ENCODE measurements at regions of chr6 and their contacts with region 1.

Region 1: GRCh38 chr6:20401205-20402091 is at the start of gene E2F3:
- H3K4me3 Mint-ChIP-seq: peak within 1 kb of the TSS; percentile 93
- H3K27ac Mint-ChIP-seq: peak within 1 kb of the TSS; percentile 99
- H3K4me1 Mint-ChIP-seq: peaks cover 9% of the 10 kb centered on the region
- H3K27me3 Mint-ChIP-seq: no peaks in the 10 kb centered on the region

Region 2: GRCh38 chr6:20212392-20213217 is 188.8 kb before region 1 on chr6 and contains the start of gene MBOAT1:
- intact Hi-C with region 1: loop called (anchors 5 kb)
- H3K4me3 Mint-ChIP-seq: peak within 1 kb of the TSS; percentile 81
- H3K27ac Mint-ChIP-seq: peak within 1 kb of the TSS; percentile 97
- H3K4me1 Mint-ChIP-seq: peaks cover 35% of the 10 kb centered on the region
- H3K27me3 Mint-ChIP-seq: no peaks in the 10 kb centered on the region

Region 3: DNA sequence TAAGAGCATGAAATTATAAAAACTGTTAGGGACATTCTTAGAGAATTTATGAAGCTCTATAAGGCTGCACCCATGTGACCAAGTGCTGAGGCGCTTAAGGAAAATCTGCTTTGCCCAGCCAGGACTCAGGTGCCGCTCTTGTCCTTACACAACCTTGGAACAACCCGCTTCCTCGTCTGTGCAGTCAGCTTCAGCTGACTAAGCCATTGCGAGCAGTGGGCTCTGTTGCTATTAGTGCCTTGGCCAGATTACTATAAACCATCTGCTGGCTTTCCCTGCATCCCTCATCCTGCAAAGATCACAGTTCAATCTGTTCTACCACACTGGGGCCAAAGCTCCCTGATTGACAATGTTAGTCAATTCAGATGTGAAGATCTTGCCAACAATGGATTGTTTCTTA is 88.8 kb before region 1 on chr6:
- intact Hi-C with region 1: loop called (anchors 5 kb)
- H3K4me3 Mint-ChIP-seq: no peak overlapping the region
- H3K27ac Mint-ChIP-seq: no peak overlapping the region
- H3K4me1 Mint-ChIP-seq: peaks cover 13% of the 10 kb centered on the region
- H3K27me3 Mint-ChIP-seq: peaks cover 11% of the 10 kb centered on the region

Region 4: DNA sequence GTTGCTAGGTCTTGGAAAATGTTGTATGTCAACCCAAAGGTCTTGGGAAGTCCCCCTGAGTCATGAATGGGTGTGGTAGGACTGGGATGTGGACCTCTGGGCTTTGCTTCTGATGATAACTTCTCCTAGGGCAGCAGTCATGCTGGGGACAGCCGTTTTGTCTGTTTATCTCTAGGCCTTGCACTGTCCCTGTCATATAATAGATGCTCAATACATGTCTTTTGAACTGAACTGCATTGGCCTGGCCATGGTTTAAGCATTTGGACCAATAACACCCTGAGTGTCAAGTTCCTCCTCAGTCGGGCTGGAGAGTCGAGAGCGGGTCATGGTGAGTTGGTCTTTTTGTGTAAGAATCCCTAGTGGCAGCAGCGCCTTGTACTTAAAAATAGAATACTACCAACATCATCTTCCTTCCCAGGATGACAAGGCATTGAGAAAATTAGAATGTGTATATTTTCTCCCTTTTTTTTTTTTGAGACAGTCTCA is 43.4 kb after region 1 on chr6:
- intact Hi-C with region 1: loop called (anchors 5 kb)
- H3K4me3 Mint-ChIP-seq: no peak overlapping the region
- H3K27ac Mint-ChIP-seq: peak overlapping the region; percentile 80
- H3K4me1 Mint-ChIP-seq: peaks cover 72% of the 10 kb centered on the region
- H3K27me3 Mint-ChIP-seq: no peaks in the 10 kb centered on the region

Region 5: DNA sequence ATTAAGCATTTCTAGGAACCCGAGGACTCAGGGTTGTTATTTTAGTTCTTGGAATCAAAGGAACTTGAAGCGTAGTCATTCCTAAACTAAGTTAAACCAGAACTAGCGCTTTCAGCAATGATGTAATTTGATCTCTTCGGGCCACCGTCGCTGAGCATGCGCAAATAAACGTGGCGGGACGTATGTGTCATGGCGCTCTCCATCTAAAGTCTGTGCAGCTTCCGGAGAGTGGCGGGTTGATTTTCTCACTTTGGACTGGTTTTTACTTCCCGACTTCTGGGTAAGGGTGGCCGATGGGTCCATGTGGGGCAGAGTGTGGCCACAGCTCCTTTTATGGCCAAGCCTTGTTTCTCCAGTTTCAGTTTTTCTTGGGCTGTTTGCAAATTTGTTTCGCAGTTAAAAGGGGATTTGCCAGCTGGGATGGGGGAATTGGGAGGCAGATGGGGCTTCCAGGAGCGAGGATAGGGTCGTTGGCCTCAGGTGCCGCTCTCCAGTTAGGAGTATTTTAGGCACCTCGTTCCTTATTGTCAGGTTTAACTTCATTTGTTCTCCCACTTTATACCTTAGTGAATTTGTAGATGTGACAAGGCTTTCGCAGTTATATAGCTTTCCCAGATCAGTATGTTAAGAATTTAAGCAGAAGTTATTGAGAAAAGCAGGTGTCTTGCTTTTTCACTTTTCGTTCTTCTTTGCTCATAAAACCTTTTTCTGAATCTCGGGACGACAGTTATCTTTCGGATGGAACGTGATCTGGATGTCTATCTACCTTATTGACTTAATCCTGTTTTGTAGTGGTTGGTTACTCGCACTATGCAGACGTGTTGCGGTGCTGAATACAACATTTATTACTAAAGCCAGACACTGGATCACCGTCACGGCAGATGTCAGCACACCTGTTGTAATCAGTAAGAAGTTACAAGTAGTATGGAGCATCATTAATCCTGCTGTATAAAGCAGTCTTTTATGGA is 133.1 kb after region 1 on chr6 and contains the start of gene CDKAL1:
- intact Hi-C with region 1: loop called (anchors 2 kb)
- H3K4me3 Mint-ChIP-seq: peak within 1 kb of the TSS; percentile 92
- H3K27ac Mint-ChIP-seq: peak within 1 kb of the TSS; percentile 94
- H3K4me1 Mint-ChIP-seq: peaks cover 36% of the 10 kb centered on the region
- H3K27me3 Mint-ChIP-seq: no peaks in the 10 kb centered on the region

Measured in dendritic cell treated with granulocyte-macrophage colony-stimulating factor and Interleukin-4, amounts not matched to agents 40 ng/mL and 50 ng/mL, for 4 days (primary cell).